HepG2 (cell line): ENCODE measurements at regions of chr1 and their contacts with region 1.

Region 1: GRCh38 chr1:55478742-55479141 is 263.6 kb upstream of the USP24 start:
- DNase-seq: peak; percentile 20
- ATAC-seq: peak; percentile 43
- H3K4me3 ChIP-seq: no peak overlapping the region
- H3K27ac ChIP-seq: no peak overlapping the region
- H3K4me1 ChIP-seq: peaks cover 45% of the 10 kb centered on the region
- H3K27me3 ChIP-seq: no peaks in the 10 kb centered on the region
- CTCF ChIP-seq: peak; percentile 54
- EP300 ChIP-seq: no peak
- POLR2A ChIP-seq: no peak
- RAD21 ChIP-seq: 0 out of 2 replicates have a peak, but pooled peaks have one; percentile 34

Region 2: DNA sequence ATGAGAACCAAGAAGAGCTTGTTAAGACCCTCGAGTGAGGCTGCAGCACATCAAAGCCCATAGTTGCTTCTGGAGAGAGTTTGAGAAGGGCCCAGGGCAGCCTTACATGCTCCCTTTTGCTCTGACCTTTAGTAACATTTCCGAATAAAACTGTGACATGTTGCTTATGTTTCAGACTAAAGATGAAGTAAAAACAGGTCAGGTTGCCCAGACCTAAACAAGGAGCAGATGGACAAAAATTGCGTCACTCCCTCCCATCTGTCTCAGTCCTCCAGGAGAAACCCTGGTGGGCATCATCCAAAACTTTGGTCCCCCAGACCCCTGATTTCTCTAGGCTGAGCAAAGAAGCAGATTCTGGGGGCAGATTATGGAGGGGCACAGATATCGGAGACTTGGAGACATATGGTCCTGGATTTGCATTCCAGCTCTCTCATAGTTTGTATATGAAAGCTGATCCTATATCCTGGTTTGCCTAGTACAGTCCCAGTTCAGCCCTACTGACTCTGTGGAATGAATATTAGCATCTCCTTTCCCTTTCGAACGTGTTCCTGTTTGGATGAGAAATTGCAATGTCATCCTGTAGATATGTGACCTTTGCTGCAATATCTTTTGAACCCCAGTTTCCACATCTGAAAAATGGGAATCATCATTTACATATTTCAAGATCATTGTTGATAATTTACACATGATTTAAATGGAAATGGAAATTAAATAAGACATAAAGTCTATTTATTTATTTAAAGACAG is 41.4 kb after region 1 on chr1:
- CTCF ChIA-PET with region 1: no interaction called
- POLR2A ChIA-PET with region 1: no interaction called
- in situ Hi-C with region 1: no loop called
- intact Hi-C with region 1: no loop called
- DNase-seq: no peak
- ATAC-seq: no peak
- H3K4me3 ChIP-seq: no peak overlapping the region
- H3K27ac ChIP-seq: no peak overlapping the region
- H3K4me1 ChIP-seq: peaks cover 28% of the 10 kb centered on the region
- H3K27me3 ChIP-seq: no peaks in the 10 kb centered on the region
- CTCF ChIP-seq: no peak
- EP300 ChIP-seq: no peak
- POLR2A ChIP-seq: no peak
- RAD21 ChIP-seq: no peak

Region 3: GRCh38 chr1:55632058-55632457 is 153.3 kb after region 1 on chr1:
- CTCF ChIA-PET with region 1: no interaction called
- POLR2A ChIA-PET with region 1: no interaction called
- in situ Hi-C with region 1: no loop called
- intact Hi-C with region 1: no loop called
- DNase-seq: no peak
- ATAC-seq: no peak
- H3K4me3 ChIP-seq: no peak overlapping the region
- H3K27ac ChIP-seq: no peak overlapping the region
- H3K4me1 ChIP-seq: no peaks in the 10 kb centered on the region
- H3K27me3 ChIP-seq: peaks cover 0 to 4% of the 10 kb centered on the region in 2 experiments; a peak in 1 of 5 replicates
- CTCF ChIP-seq: no peak
- EP300 ChIP-seq: no peak
- POLR2A ChIP-seq: no peak
- RAD21 ChIP-seq: no peak

Region 4: DNA sequence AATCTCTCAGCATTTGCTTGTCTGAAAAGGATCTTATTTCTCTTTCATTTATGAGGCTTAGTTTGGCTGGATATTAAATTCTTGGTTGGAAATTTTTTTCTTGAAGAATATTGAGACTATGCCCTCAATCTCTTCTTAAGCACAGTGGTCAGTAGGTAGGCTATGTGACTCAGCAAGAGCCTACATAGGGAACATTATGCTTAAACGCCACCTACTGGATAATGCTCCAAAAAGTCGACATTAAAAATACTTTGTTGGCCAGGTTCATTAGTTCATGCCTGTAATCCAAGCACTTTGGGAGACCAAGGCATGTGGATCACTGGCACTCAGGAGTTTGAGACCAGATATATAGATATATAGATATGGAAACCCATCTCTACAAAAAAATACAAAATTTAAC is 414.4 kb after region 1 on chr1:
- CTCF ChIA-PET with region 1: interaction called, 3 read pairs
- POLR2A ChIA-PET with region 1: no interaction called
- in situ Hi-C with region 1: loop called (anchors 25 kb)
- intact Hi-C with region 1: loop called (anchors 2 kb)
- DNase-seq: peak; percentile 59
- ATAC-seq: peak; percentile 66
- H3K4me3 ChIP-seq: no peak overlapping the region
- H3K27ac ChIP-seq: no peak overlapping the region
- H3K4me1 ChIP-seq: no peaks in the 10 kb centered on the region; the same call in 1 of the 2 replicates
- H3K27me3 ChIP-seq: no peaks in the 10 kb centered on the region; a peak in 1 of 5 replicates
- CTCF ChIP-seq: peak; percentile 63
- EP300 ChIP-seq: no peak
- POLR2A ChIP-seq: no peak
- RAD21 ChIP-seq: peak; percentile 36; the same call in 1 of the 2 replicates